Activated CD4-positive, alpha-beta T cell treated with anti-CD3 and anti-CD28 coated beads for 36 hours (primary cell): ENCODE measurements at regions of chr17 and their contacts with region 1.

Region 1: DNA sequence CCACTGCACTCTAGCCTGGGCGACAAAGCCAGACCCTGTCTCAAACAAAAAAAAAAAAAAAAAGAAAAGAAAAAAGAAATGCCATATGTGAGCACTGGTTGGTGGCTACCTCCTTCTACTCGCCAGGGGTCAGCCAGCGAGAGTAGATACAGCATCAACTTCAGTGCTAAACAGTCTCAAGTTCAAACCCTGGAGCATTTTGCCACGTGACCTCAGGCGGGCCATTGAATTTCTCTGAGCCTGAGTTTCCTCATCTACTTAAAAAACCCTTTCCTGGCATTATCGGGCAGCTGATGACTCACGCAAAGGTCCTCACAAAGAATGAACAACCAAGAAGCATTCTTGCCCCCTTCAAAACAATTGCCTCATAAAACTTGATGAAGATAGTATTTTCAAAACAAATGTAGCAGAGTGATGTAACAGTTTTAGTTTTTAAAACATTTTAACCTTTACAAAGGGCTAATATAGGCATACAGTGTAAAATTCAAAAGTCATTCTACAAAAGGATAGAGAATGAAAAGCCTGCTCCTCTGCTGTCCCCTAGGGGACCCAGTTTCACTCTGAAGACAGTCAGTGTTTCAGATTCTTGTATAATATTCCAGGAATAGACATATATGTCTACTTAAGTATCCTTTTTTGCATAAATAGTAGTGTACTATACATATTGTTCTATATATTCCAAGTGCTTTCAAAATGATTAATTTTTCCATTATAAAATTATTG is 28.4 kb downstream of the DNAH2 start:
- DNase-seq: no peak
- ATAC-seq: no peak
- H3K4me3 Mint-ChIP-seq: no peak overlapping the region
- H3K27ac Mint-ChIP-seq: no peak overlapping the region
- H3K4me1 Mint-ChIP-seq: no peaks in the 10 kb centered on the region
- H3K27me3 Mint-ChIP-seq: peaks cover 3% of the 10 kb centered on the region

Region 2: GRCh38 chr17:7667656-7668406 is 78.1 kb before region 1 on chr17:
- CTCF ChIA-PET with region 1: no interaction called
- POLR2A ChIA-PET with region 1: no interaction called
- intact Hi-C with region 1: no loop called
- DNase-seq: no peak
- ATAC-seq: no peak
- H3K4me3 Mint-ChIP-seq: no peak overlapping the region
- H3K27ac Mint-ChIP-seq: no peak overlapping the region
- H3K4me1 Mint-ChIP-seq: no peaks in the 10 kb centered on the region
- H3K27me3 Mint-ChIP-seq: no peaks in the 10 kb centered on the region

Region 3: DNA sequence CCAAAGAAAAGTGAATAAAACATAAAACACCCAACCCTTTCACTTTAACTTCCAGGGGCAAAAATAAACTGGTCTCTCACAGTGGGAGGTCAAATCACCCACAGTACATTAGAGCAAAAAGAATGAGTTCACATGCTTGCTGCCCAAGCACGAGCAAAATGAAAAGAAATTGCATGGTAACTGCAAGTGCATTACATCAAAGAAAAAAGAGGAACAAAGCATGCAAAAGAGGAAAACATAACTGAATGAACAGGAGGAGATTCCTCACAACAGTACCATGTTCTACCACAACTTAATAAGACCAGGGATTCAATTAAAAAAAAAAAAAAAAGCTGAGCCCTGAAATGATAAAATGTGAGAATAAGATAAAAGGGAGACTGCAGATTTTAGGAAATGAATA is 16.1 kb before region 1 on chr17:
- CTCF ChIA-PET with region 1: interaction called, 14 read pairs
- POLR2A ChIA-PET with region 1: interaction called, 4 read pairs
- intact Hi-C with region 1: no loop called
- DNase-seq: no peak
- ATAC-seq: no peak
- H3K4me3 Mint-ChIP-seq: no peak overlapping the region
- H3K27ac Mint-ChIP-seq: no peak overlapping the region
- H3K4me1 Mint-ChIP-seq: no peaks in the 10 kb centered on the region
- H3K27me3 Mint-ChIP-seq: peaks cover 9% of the 10 kb centered on the region

Region 4: DNA sequence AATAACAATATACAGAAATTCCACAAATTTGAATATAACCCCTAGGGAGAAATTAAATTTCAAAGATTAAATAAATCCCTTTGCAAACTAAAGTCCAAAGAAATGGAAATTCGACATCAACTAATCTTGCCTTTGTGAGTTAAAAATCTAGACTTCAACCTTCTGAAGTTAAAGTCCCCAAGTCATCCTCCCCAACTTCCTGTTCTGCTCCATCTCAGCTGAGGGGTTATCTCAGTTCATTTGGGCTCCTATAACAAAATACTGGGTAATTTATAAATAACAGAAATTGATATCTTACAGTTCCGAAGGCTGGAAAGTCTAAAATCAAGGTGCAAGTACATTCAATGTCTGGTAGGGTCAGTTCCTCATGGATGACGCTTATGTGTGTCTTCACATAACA is 65.3 kb after region 1 on chr17:
- CTCF ChIA-PET with region 1: interaction called, 12 read pairs
- POLR2A ChIA-PET with region 1: no interaction called
- intact Hi-C with region 1: loop called in 1 of 2 experiments (anchors 5 kb)
- DNase-seq: no peak
- ATAC-seq: no peak
- H3K4me3 Mint-ChIP-seq: no peak overlapping the region
- H3K27ac Mint-ChIP-seq: no peak overlapping the region
- H3K4me1 Mint-ChIP-seq: no peaks in the 10 kb centered on the region
- H3K27me3 Mint-ChIP-seq: peaks cover 3% of the 10 kb centered on the region

Region 5: GRCh38 chr17:7816926-7817642 is 71.2 kb after region 1 on chr17:
- CTCF ChIA-PET with region 1: interaction called, 12 read pairs
- POLR2A ChIA-PET with region 1: no interaction called
- intact Hi-C with region 1: loop called in 1 of 2 experiments (anchors 5 kb)
- DNase-seq: no peak
- ATAC-seq: no peak
- H3K4me3 Mint-ChIP-seq: no peak overlapping the region
- H3K27ac Mint-ChIP-seq: no peak overlapping the region
- H3K4me1 Mint-ChIP-seq: no peaks in the 10 kb centered on the region
- H3K27me3 Mint-ChIP-seq: no peaks in the 10 kb centered on the region

Region 6: GRCh38 chr17:8048236-8048635 is 302.3 kb after region 1 on chr17:
- CTCF ChIA-PET with region 1: no interaction called
- POLR2A ChIA-PET with region 1: no interaction called
- intact Hi-C with region 1: no loop called
- DNase-seq: no peak
- ATAC-seq: no peak
- H3K4me3 Mint-ChIP-seq: no peak overlapping the region
- H3K27ac Mint-ChIP-seq: no peak overlapping the region
- H3K4me1 Mint-ChIP-seq: no peaks in the 10 kb centered on the region
- H3K27me3 Mint-ChIP-seq: no peaks in the 10 kb centered on the region